ENCODE measurements at regions of chr18 and their contacts with region 1.

Region 1: GRCh38 chr18:54269893-54270844 is 852 bp downstream of the POLI start:
- DNase-seq: peak; percentile 68 to 74 (median 69)
- H3K4me3 ChIP-seq: peak overlapping the region; percentile 67 to 86 (median 68)
- H3K4me3 Mint-ChIP-seq: peak overlapping the region; percentile 85 to 89
- H3K27ac ChIP-seq: peak overlapping the region; percentile 93 to 97
- H3K27ac Mint-ChIP-seq: peak overlapping the region; percentile 94 to 98 (median 97)
- H3K4me1 ChIP-seq: peaks cover 24 to 25% of the 10 kb centered on the region in 2 donors
- H3K4me1 Mint-ChIP-seq: peaks cover 38% of the 10 kb centered on the region
- H3K27me3 ChIP-seq: no peaks in the 10 kb centered on the region
- H3K27me3 Mint-ChIP-seq: no peaks in the 10 kb centered on the region
- CTCF ChIP-seq: peak; percentile 72

Region 2: GRCh38 chr18:54004830-54005229 is 265.3 kb before region 1 on chr18:
- intact Hi-C with region 1: no loop called
- DNase-seq: no peak
- H3K4me3 ChIP-seq: no peak overlapping the region
- H3K4me3 Mint-ChIP-seq: no peak overlapping the region
- H3K27ac ChIP-seq: no peak overlapping the region
- H3K27ac Mint-ChIP-seq: no peak overlapping the region
- H3K4me1 ChIP-seq: no peaks in the 10 kb centered on the region
- H3K4me1 Mint-ChIP-seq: no peaks in the 10 kb centered on the region
- H3K27me3 ChIP-seq: no peaks in the 10 kb centered on the region
- H3K27me3 Mint-ChIP-seq: peaks cover 0 to 2% (median 0%) of the 10 kb centered on the region in 3 donors
- CTCF ChIP-seq: no peak

Region 3: DNA sequence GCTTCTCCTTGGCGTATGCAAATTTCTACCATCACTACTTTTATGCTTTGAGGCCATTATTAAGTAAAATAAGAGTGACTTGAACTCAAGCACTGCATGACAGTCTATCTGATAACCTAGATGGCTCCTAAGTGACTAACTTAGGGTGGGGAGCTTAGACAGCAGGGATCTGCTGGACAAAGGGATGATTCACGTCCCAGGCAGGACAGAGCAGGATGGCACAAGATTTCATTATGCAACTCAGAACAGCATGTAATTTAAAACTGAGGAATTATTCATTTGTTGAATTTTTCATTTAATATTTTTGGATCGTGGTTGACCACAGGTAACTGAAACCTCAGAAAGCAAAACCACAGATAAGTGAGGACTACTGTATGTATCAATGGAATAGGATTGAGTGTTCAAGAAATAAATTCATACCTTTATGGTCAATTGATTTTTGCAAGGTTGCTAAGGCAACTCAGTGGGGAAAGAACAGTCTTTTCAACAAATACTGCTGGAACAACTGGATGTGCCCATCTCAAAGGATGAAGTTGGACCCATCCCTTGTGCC is 161.0 kb before region 1 on chr18:
- intact Hi-C with region 1: no loop called
- DNase-seq: no peak
- H3K4me3 ChIP-seq: no peak overlapping the region
- H3K4me3 Mint-ChIP-seq: no peak overlapping the region
- H3K27ac ChIP-seq: no peak overlapping the region
- H3K27ac Mint-ChIP-seq: no peak overlapping the region
- H3K4me1 ChIP-seq: no peaks in the 10 kb centered on the region
- H3K4me1 Mint-ChIP-seq: no peaks in the 10 kb centered on the region
- H3K27me3 ChIP-seq: peaks cover under 1 to 12% of the 10 kb centered on the region in 2 donors
- H3K27me3 Mint-ChIP-seq: peaks cover 9 to 20% (median 12%) of the 10 kb centered on the region in 3 donors
- CTCF ChIP-seq: no peak

Region 4: DNA sequence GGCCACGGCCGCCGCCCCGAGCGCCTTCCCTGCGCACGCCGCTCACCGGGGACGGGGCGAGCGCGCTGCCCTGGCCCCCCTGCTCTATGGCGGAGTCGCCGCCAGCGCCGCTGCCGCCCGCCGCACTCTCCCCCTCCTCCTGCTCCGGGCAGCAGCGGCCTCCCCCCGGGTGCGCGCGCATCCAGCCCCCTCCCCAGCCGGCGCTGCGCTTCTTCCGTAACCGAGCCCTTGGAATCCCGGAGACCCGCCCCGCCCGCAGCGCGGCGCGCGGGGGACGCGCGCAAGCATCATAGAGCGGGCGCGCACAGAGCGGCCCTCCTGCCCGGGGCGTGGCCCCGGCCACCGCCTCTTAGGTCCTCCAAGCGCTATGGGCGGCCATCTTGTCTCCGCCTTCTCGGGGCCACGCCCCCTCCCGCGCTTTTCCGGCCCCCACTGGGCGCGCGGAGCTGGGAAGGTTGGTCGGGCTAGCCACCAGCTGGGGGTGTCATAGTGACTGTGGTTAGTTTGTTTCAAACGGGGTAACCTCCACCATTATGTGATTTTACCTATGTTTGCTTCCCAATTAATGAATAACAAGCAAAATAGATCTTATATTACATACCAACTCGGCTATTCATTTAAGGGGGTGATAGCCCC is 45.7 kb before region 1 on chr18 and contains the start of gene MBD2:
- intact Hi-C with region 1: loop called (anchors 2 kb)
- DNase-seq: peak; percentile 91 to 96 (median 94)
- H3K4me3 ChIP-seq: peak within 1 kb of the TSS; percentile 72 to 91 (median 84)
- H3K4me3 Mint-ChIP-seq: peak within 1 kb of the TSS; percentile 92 to 93
- H3K27ac ChIP-seq: peak within 1 kb of the TSS; percentile 68 to 78
- H3K27ac Mint-ChIP-seq: peak within 1 kb of the TSS; percentile 85 to 96 (median 92)
- H3K4me1 ChIP-seq: peaks cover 25 to 42% of the 10 kb centered on the region in 2 donors
- H3K4me1 Mint-ChIP-seq: peaks cover 44% of the 10 kb centered on the region
- H3K27me3 ChIP-seq: no peaks in the 10 kb centered on the region
- H3K27me3 Mint-ChIP-seq: peaks cover 0 to 2% (median 0%) of the 10 kb centered on the region in 3 donors
- CTCF ChIP-seq: no peak
- polyA plus RNA-seq, gene MBD2: 11.6 to 64.9 (median 25.2) TPM

Measured in CD14-positive monocyte (primary cell).